PC-3 (cell line): ENCODE measurements at regions of chr22 and their contacts with region 1.

Region 1: GRCh38 chr22:22110548-22111266 is 128.1 kb upstream of the TOP3B start:
- DNase-seq: peak; percentile 73
- ATAC-seq: peak; percentile 78
- H3K4me3 ChIP-seq: peak overlapping the region; percentile 31; the same call in 1 of the 2 replicates
- H3K27ac ChIP-seq: peak overlapping the region; percentile 97
- H3K4me1 ChIP-seq: peaks cover 26% of the 10 kb centered on the region
- H3K27me3 ChIP-seq: no peaks in the 10 kb centered on the region
- CTCF ChIP-seq: peak; percentile 59

Region 2: DNA sequence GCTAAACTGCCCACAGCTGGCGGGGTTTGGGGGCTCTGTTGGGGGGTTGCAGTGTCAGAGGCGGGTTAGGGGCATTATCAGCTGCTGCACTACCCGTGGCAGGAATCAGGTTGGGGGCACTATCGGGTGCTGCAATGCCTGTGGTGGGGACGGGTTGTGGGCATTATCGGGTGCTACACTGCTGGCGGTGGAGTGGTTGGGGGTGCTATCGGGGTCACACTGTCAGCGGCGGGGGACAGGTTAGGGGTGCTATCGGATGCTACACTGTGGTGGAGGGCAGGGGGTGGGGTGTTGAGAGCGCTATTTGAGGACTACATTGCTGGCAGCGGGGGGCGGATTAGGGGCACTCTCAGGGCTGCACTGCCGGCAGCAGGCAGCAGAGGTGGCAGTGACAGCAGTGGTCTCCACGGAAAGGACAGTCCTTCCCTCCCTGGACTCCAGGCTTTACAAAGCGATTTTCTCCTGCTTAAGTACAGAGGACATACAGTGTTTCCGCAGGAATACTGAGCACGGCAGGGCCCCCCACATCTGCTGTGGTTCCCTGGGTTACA is 14.4 kb after region 1 on chr22:
- CTCF ChIA-PET with region 1: interaction called, 14 read pairs
- POLR2A ChIA-PET with region 1: no interaction called
- intact Hi-C with region 1: no loop called
- DNase-seq: no peak
- ATAC-seq: no peak
- H3K4me3 ChIP-seq: no peak overlapping the region
- H3K27ac ChIP-seq: no peak overlapping the region
- H3K4me1 ChIP-seq: no peaks in the 10 kb centered on the region
- H3K27me3 ChIP-seq: no peaks in the 10 kb centered on the region; the same call in 1 of the 2 replicates
- CTCF ChIP-seq: no peak

Region 3: DNA sequence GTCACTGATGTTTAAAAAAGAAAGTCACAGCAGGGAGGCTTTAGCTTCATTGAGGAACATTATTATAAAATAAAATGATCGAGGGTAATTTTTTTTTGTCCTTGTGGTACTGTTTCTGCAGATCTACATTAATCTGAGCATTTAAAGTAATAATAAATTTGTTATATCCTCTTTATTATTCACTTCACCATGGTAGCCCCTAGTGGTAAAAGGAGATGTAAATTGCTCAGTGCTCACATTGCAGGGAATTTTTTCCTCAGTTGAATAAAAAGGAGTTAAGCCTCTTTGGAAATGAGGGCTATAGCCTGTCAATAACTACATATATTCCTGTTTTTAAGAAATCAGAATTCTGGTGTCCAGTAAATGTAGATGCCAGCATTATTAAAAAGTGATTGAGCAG is 34.2 kb after region 1 on chr22:
- CTCF ChIA-PET with region 1: no interaction called
- POLR2A ChIA-PET with region 1: no interaction called
- intact Hi-C with region 1: loop called (anchors 5 kb)
- DNase-seq: peak; percentile 27
- ATAC-seq: no peak
- H3K4me3 ChIP-seq: no peak overlapping the region
- H3K27ac ChIP-seq: no peak overlapping the region
- H3K4me1 ChIP-seq: no peaks in the 10 kb centered on the region
- H3K27me3 ChIP-seq: peaks cover 64% of the 10 kb centered on the region
- CTCF ChIP-seq: peak; percentile 37; the same call in 1 of the 2 replicates

Region 4: GRCh38 chr22:22508274-22509176 is 397.8 kb after region 1 on chr22 and contains the start of gene ZNF280B:
- CTCF ChIA-PET with region 1: no interaction called
- POLR2A ChIA-PET with region 1: no interaction called
- intact Hi-C with region 1: no loop called
- DNase-seq: peak; percentile 71
- ATAC-seq: peak; percentile 99
- H3K4me3 ChIP-seq: peak within 1 kb of the TSS; percentile 71
- H3K27ac ChIP-seq: no peak within 1 kb of the TSS
- H3K4me1 ChIP-seq: no peaks in the 10 kb centered on the region; the same call in 1 of the 2 replicates
- H3K27me3 ChIP-seq: peaks cover 6% of the 10 kb centered on the region; the same call in 1 of the 2 replicates
- CTCF ChIP-seq: peak; percentile 61
- total RNA-seq, gene ZNF280B: 0.66 and 1.7 TPM in 2 replicates